ENCODE measurements at regions of chr17 and their contacts with region 1.

Region 1: GRCh38 chr17:17900615-17901520 is 64.1 kb upstream of the SREBF1 start:
- DNase-seq: peak; percentile 78 to 82
- H3K4me3 ChIP-seq: no peak overlapping the region
- H3K27ac ChIP-seq: peak overlapping the region; percentile 22 to 61 (median 33)
- H3K4me1 ChIP-seq: peaks cover 21 to 39% of the 10 kb centered on the region in 2 donors
- H3K27me3 ChIP-seq: no peaks in the 10 kb centered on the region
- CTCF ChIP-seq: no peak
- POLR2A ChIP-seq: no peak

Region 2: GRCh38 chr17:17812211-17813057 is 88.4 kb before region 1 on chr17:
- intact Hi-C with region 1: no loop called
- DNase-seq: peak; percentile 70 to 72
- H3K4me3 ChIP-seq: no peak overlapping the region
- H3K27ac ChIP-seq: peak overlapping the region in 2 of 3 donors; percentile 8 to 11
- H3K4me1 ChIP-seq: peaks cover 32 to 58% of the 10 kb centered on the region in 2 donors
- H3K27me3 ChIP-seq: no peaks in the 10 kb centered on the region
- CTCF ChIP-seq: peak; percentile 97 to 100 (median 98)
- POLR2A ChIP-seq: no peak

Region 3: DNA sequence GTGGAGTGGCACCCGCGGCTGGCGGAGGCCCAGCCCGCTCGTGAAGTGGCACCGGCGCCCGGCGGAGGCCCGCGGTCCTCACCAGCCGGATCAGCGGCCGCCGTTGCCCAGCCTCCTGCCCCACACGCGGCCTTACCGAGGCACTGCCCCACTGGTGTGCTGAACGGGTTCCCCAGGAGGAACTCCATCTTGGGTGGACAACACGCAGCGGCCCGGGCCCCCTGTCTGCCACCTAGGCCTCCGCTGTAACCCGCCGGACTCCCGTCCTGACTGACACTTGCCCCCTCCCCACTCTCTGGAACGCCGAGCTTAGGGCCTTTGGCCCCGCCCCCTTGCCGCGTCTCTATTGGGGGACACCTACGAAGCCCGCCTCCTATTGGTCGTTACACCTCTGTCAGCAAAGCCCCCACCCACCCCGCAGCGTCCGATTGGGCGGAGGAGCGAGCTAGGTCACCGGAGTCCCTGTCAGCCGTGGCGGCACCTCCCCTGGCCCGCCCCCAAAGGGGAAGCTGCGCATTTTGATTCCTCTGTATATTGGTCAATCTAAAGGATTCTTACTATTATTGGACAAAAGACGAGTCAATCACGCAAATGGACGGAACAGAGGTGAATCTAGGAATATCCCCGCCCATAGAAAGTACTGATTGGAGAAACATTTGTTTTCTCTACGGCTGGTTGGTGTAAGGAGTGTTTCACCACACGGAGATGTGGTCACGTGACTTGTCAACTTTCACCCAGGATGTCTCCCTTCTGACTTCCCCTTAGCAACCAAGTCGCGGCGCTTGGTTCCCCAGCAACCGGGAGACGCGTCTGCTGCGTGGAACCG is 71.5 kb after region 1 on chr17 and contains the starts of genes DRC3 and TOM1L2:
- intact Hi-C with region 1: loop called (anchors 10 kb)
- DNase-seq: peak; percentile 100
- H3K4me3 ChIP-seq: peak within 1 kb of the TSS; percentile 38 to 85 (median 79)
- H3K27ac ChIP-seq: peak within 1 kb of the TSS; percentile 60 to 86 (median 75)
- H3K4me1 ChIP-seq: peaks cover 30 to 32% of the 10 kb centered on the region in 2 donors
- H3K27me3 ChIP-seq: no peaks in the 10 kb centered on the region
- CTCF ChIP-seq: peak in 3 of 6 experiments; percentile 6 to 29 (median 21)
- POLR2A ChIP-seq: peak; percentile 92 to 94
- total RNA-seq, gene DRC3: 18.5 to 28.7 (median 23.4) TPM
- total RNA-seq, gene TOM1L2: 138 to 881 (median 257) TPM

Region 4: DNA sequence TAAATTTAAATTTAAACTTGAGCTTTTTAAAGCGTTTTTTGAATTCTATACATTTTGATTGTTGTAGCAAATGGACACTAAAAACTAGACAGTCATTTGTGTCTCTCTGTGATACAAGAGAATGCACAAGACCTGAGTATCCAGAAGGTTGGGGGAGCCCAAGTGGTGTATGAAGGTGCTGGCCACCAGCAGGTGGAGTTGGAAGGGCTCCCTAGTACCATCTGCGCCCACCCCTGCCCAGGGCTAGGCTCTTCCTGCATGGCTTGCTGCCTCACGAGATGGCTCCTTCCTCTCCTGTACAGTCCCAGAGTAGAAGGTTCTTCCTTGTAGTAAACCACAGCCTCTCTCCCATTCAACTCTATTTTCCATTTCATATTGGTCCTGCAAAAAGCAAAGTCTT is 155.3 kb after region 1 on chr17:
- intact Hi-C with region 1: no loop called
- DNase-seq: no peak
- H3K4me3 ChIP-seq: no peak overlapping the region
- H3K27ac ChIP-seq: no peak overlapping the region
- H3K4me1 ChIP-seq: peaks cover 0 to 7% of the 10 kb centered on the region in 2 donors
- H3K27me3 ChIP-seq: no peaks in the 10 kb centered on the region
- CTCF ChIP-seq: no peak
- POLR2A ChIP-seq: no peak

Region 5: GRCh38 chr17:18141210-18141803 is 240.4 kb after region 1 on chr17:
- intact Hi-C with region 1: no loop called
- DNase-seq: peak in 1 of 2 donors; percentile 22
- H3K4me3 ChIP-seq: no peak overlapping the region
- H3K27ac ChIP-seq: no peak overlapping the region
- H3K4me1 ChIP-seq: no peaks in the 10 kb centered on the region
- H3K27me3 ChIP-seq: no peaks in the 10 kb centered on the region
- CTCF ChIP-seq: peak; percentile 43 to 65 (median 60)
- POLR2A ChIP-seq: no peak

Measured in thyroid gland (tissue), 4 donors.